Mucosa of descending colon (tissue), 3 donors: ENCODE measurements at regions of chr7 and their contacts with region 1.

Region 1: GRCh38 chr7:55255496-55256435 is 109.4 kb upstream of the LANCL2 start:
- DNase-seq: peak; percentile 77 to 90 (median 89)
- ATAC-seq: peak; percentile 92
- H3K4me3 ChIP-seq: no peak overlapping the region
- H3K4me1 ChIP-seq: peaks cover 5% of the 10 kb centered on the region
- CTCF ChIP-seq: peak; percentile 88

Region 2: GRCh38 chr7:54773472-54774399 is 482.0 kb before region 1 on chr7:
- intact Hi-C with region 1: loop called (anchors 5 kb)
- DNase-seq: peak; percentile 79 to 90 (median 87)
- ATAC-seq: peak; percentile 99
- H3K4me3 ChIP-seq: no peak overlapping the region
- H3K4me1 ChIP-seq: no peaks in the 10 kb centered on the region
- CTCF ChIP-seq: peak; percentile 82

Region 3: DNA sequence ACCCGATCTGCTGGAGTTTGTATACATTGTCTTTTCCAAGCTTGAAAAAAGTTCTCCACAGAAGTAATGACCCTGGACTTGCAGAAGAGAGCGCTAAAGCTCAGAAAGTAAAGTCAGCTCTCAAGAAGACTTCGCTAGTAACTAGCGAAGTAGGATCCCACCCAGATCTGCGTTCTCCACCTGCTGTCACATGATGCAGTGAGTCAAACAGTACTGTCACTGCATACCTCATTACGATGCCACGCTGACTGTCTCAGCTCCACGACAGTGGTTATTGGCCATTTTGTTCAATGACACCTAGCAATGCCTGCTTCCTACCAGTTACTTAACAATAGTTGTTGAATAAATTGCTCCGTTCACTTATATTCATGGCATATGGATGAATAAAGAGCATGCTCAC is 467.1 kb before region 1 on chr7:
- intact Hi-C with region 1: loop called in 1 of 2 experiments (anchors 5 kb)
- DNase-seq: peak in 2 of 3 donors; percentile 27 to 29
- ATAC-seq: peak; percentile 92
- H3K4me3 ChIP-seq: no peak overlapping the region
- H3K4me1 ChIP-seq: no peaks in the 10 kb centered on the region
- CTCF ChIP-seq: peak; percentile 22

Region 4: GRCh38 chr7:54898659-54899340 is 357.0 kb before region 1 on chr7:
- intact Hi-C with region 1: no loop called
- DNase-seq: no peak
- ATAC-seq: no peak
- H3K4me3 ChIP-seq: no peak overlapping the region
- H3K4me1 ChIP-seq: no peaks in the 10 kb centered on the region
- CTCF ChIP-seq: no peak

Region 5: GRCh38 chr7:55120481-55121198 is 135.1 kb before region 1 on chr7:
- intact Hi-C with region 1: no loop called
- DNase-seq: no peak
- ATAC-seq: peak; percentile 75
- H3K4me3 ChIP-seq: no peak overlapping the region
- H3K4me1 ChIP-seq: peaks cover 9% of the 10 kb centered on the region
- CTCF ChIP-seq: no peak

Region 6: GRCh38 chr7:55314962-55315685 is 59.4 kb after region 1 on chr7:
- intact Hi-C with region 1: no loop called
- DNase-seq: no peak
- ATAC-seq: no peak
- H3K4me3 ChIP-seq: no peak overlapping the region
- H3K4me1 ChIP-seq: no peaks in the 10 kb centered on the region
- CTCF ChIP-seq: no peak